ENCODE measurements at regions of chr7 and their contacts with region 1.

Region 1: GRCh38 chr7:29921404-29922010 is 68.1 kb downstream of the SCRN1 start:
- DNase-seq: peak; percentile 60
- CTCF ChIP-seq: peak; percentile 74

Region 2: GRCh38 chr7:29878081-29878688 is 43.3 kb before region 1 on chr7:
- CTCF ChIA-PET with region 1: interaction called, 17 read pairs
- POLR2A ChIA-PET with region 1: no interaction called
- DNase-seq: peak; percentile 37
- CTCF ChIP-seq: peak; percentile 56

Region 3: DNA sequence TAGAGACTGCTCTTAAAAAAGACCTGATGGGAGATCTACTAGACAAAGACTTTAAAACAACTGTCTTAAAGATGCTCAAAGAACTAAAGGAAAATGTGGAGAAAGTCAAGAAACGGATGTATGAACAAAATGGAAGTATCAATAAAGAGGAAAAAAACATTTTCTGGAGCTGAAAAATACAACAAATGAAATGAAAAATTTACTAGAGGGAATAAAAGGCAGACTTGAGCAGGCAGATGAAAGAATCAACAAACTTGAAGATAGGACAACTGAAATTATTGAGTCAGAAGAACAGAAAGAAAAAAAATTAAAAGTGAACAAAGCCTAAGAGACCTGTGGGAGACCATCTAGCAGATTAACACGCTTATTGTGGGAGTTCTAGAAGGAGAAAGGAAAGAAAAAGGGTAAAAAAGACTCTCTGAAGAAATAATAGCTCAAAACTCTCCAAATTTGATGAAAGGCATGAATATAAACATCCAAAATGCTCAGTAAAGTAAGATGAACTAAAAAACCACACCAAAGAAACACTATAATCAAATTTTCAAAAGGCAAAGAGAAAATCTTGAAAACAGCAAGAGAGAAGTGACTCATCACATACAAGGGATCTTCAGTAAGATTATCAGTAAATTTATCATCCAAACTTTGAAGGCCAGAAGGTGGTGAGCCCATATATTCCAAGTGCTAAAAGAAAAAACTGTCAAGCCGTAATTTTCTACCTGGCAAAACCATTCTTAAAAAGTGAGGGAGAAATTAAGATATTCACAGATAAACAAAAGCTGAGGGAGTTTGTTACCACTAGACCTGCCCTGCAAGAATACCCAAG is 15.1 kb before region 1 on chr7:
- CTCF ChIA-PET with region 1: interaction called, 33 read pairs
- POLR2A ChIA-PET with region 1: no interaction called
- DNase-seq: no peak
- CTCF ChIP-seq: no peak

Region 4: GRCh38 chr7:29935111-29935510 is 13.6 kb after region 1 on chr7:
- CTCF ChIA-PET with region 1: interaction called, 34 read pairs
- POLR2A ChIA-PET with region 1: no interaction called
- DNase-seq: no peak
- CTCF ChIP-seq: no peak

Region 5: DNA sequence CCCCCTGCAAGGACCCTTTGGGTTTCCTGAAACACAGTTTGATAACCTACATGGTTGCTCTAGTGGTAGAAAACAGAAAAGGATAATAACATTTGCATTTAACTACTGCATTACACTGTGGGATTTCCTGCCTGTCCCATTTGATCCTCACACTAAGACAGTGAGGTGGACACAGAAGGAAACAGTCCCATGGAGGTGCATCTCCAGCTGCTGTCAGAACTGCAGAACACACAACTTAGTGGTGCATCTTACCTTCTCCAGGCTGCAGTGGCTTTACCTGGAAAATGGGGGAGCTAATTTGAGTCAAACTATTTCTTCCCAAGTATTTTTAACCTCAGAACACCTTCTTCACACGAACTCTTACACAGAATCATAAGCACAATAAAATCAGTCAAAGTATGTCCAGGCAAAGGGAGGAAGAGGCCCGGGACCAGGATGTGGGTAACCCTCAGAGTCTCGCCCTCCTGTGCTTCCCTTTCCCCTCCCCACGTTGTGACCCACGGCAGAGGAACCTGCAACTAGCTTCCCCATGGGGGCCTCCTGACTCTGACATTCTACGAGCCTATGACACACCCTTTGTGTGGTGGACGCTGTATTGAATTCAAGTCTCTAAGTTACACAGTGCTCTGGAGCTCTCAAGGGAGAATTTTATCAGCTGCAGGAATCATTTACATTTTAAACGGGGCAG is 34.4 kb after region 1 on chr7:
- CTCF ChIA-PET with region 1: interaction called, 10 read pairs
- POLR2A ChIA-PET with region 1: no interaction called
- DNase-seq: peak; percentile 35
- CTCF ChIP-seq: no peak

Region 6: DNA sequence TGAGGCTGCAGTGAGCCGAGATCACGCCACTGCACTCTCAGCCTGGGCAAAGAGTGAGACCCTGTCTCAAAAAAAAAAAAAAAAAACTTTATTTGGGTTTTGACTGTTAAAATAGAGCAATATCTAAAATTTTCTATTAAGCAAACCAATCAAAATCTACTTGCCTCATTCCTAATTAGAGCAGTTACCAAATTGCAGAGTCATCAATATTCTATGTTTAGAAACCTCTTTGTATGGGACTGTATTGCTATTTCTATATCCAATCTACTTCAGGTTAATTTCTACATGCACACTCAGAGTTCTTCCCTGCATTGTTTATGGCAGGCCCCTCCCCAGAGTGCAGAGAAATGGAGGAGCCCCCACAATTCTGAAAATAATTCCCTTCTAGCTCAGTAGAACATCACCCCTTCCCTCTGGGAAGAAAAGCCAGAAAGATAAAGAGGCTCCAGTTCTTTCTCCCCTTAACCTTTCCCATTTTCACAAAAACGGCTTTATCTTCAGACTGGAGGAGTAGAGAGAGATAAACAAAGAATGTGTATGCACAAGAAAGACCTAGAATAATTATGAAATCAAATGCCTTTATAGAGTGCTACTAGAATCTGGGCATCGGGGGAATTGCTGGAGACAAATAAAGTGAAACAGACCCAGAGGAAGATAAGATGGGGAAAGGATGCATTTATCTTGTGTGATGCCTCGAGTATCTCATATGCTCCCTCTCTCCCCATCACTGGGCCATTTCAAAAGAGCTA is 50.2 kb after region 1 on chr7:
- CTCF ChIA-PET with region 1: interaction called, 11 read pairs
- POLR2A ChIA-PET with region 1: no interaction called
- DNase-seq: no peak
- CTCF ChIP-seq: no peak

Measured in GM10248 (cell line).